ENCODE measurements at regions of chr18 and their contacts with region 1.

Region 1: DNA sequence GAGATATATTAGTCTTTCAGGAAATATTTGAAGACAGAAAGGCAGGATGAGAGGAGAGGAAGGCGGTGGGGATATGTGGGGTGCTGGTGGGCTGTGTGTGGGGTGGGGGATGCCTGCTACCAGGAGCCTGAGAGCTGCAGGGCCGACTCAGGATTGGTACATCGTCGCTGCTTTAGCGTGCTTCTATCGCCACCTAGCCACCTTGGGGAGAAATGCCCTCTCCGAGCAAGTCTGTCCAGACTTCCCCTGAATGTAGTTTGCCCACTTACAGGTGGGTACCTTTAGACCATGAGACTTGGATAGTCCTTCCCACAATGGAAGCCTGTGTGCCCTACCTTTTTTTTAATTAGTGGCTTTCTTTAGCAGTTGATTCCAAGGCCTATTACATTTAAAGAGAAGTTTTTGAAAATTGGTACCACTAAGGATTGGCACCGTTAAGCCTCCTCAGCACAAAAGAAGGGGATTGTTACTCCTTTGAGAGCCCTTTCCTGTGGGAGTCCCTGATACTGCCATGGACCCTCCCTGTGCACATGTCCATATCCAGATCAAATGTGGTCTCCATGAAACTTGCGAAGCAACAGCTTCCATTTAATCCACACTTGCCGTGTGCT is 114.1 kb upstream of the NDUFV2 start:
- DNase-seq: peak; percentile 42 to 66
- ATAC-seq: peak; percentile 40 to 69 (median 51)
- H3K4me3 ChIP-seq: no peak overlapping the region
- H3K27ac ChIP-seq: no peak overlapping the region
- H3K4me1 ChIP-seq: peaks cover 12% of the 10 kb centered on the region
- H3K27me3 ChIP-seq: no peaks in the 10 kb centered on the region
- CTCF ChIP-seq: peak; percentile 74

Region 2: GRCh38 chr18:8478166-8478967 is 510.0 kb before region 1 on chr18:
- intact Hi-C with region 1: loop called in 1 of 2 experiments (anchors 5 kb)
- DNase-seq: peak; percentile 51 to 71
- ATAC-seq: peak; percentile 69 to 87 (median 79)
- H3K4me3 ChIP-seq: no peak overlapping the region
- H3K27ac ChIP-seq: no peak overlapping the region
- H3K4me1 ChIP-seq: no peaks in the 10 kb centered on the region
- H3K27me3 ChIP-seq: no peaks in the 10 kb centered on the region
- CTCF ChIP-seq: peak; percentile 73

Region 3: GRCh38 chr18:8635087-8635486 is 353.3 kb before region 1 on chr18:
- intact Hi-C with region 1: no loop called
- DNase-seq: no peak
- ATAC-seq: no peak
- H3K4me3 ChIP-seq: no peak overlapping the region
- H3K27ac ChIP-seq: no peak overlapping the region
- H3K4me1 ChIP-seq: peaks cover 21% of the 10 kb centered on the region
- H3K27me3 ChIP-seq: no peaks in the 10 kb centered on the region
- CTCF ChIP-seq: no peak

Region 4: GRCh38 chr18:8654503-8655451 is 333.6 kb before region 1 on chr18:
- intact Hi-C with region 1: loop called in 1 of 2 experiments (anchors 2 kb)
- DNase-seq: no peak
- ATAC-seq: peak in 2 of 4 donors; percentile 48 to 71
- H3K4me3 ChIP-seq: no peak overlapping the region
- H3K27ac ChIP-seq: no peak overlapping the region
- H3K4me1 ChIP-seq: no peaks in the 10 kb centered on the region
- H3K27me3 ChIP-seq: no peaks in the 10 kb centered on the region
- CTCF ChIP-seq: peak; percentile 80

Region 5: DNA sequence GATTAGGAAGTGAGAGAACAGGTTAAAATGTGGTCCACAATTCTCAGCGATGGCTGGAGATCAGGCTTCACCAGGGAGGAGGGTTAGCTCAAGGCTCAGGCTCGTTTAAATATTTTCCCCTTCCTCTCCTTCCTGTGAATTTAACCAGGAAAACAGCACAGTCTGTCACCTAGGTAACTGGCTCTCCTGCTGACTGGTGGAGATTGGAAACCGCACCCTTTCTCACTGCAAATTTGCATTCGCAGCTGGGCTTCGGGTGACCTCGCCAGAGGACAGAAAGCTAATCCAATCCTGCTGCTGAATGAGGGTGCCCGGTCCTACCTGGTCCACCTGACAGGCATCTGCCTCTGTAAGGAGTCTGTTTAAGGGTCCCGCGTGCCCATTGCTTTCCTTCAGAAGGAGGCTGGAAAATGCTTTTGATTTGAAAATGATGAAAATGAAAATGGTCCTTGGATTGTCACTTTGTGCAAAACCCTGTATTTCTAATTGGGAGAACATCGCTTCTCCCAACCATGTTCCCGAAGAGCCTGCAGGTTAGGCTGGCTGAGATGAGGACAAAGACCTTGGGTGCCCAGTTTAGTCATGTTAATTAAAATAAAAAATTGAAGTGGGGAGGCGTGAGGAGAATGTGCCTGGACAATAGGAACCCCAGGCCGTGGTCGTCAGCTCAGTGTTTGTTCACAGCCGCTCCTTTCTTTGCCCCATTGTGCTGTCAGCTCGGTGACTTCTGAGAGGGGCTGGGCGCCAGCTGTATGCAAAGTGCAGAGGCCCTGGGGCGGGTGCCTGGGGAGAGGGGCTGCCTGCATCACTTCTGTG is 326.4 kb before region 1 on chr18:
- intact Hi-C with region 1: loop called in 1 of 2 experiments (anchors 10 kb)
- DNase-seq: no peak
- ATAC-seq: no peak
- H3K4me3 ChIP-seq: no peak overlapping the region
- H3K27ac ChIP-seq: no peak overlapping the region
- H3K4me1 ChIP-seq: no peaks in the 10 kb centered on the region
- H3K27me3 ChIP-seq: no peaks in the 10 kb centered on the region
- CTCF ChIP-seq: no peak

Region 6: DNA sequence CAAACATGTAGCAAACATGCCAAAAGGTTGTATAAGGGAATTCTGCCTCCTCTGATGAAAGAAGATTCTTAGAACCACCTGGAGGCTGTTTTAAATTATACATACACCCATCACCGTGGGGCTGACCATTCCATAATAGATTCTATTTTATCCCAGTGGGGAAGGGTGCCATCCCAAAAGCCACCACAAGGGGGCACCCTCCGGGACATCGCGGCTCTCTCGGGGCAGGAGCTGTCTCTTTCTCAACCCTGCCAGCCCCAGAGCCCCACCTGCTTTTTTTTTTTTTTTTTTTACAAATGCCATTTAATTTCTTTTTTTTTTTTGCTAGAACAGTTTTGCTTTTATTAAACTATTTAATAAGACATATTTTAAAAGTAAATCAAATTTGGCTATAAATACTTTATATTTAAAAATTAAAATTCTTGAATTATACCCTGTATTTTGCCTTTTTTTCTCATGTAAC is 291.6 kb before region 1 on chr18:
- intact Hi-C with region 1: loop called (anchors 2 kb)
- DNase-seq: peak; percentile 82 to 87
- ATAC-seq: peak; percentile 94 to 99 (median 96)
- H3K4me3 ChIP-seq: no peak overlapping the region
- H3K27ac ChIP-seq: no peak overlapping the region
- H3K4me1 ChIP-seq: no peaks in the 10 kb centered on the region
- H3K27me3 ChIP-seq: no peaks in the 10 kb centered on the region
- CTCF ChIP-seq: peak; percentile 94

Region 7: GRCh38 chr18:8835521-8835953 is 152.8 kb before region 1 on chr18:
- intact Hi-C with region 1: loop called in 1 of 2 experiments (anchors 10 kb)
- DNase-seq: peak; percentile 35 to 63
- ATAC-seq: peak; percentile 96 to 98 (median 96)
- H3K4me3 ChIP-seq: no peak overlapping the region
- H3K27ac ChIP-seq: peak overlapping the region; percentile 60
- H3K4me1 ChIP-seq: peaks cover 9% of the 10 kb centered on the region
- H3K27me3 ChIP-seq: no peaks in the 10 kb centered on the region
- CTCF ChIP-seq: no peak